GM13977 (cell line): ENCODE measurements at regions of chr13 and their contacts with region 1.

Region 1: DNA sequence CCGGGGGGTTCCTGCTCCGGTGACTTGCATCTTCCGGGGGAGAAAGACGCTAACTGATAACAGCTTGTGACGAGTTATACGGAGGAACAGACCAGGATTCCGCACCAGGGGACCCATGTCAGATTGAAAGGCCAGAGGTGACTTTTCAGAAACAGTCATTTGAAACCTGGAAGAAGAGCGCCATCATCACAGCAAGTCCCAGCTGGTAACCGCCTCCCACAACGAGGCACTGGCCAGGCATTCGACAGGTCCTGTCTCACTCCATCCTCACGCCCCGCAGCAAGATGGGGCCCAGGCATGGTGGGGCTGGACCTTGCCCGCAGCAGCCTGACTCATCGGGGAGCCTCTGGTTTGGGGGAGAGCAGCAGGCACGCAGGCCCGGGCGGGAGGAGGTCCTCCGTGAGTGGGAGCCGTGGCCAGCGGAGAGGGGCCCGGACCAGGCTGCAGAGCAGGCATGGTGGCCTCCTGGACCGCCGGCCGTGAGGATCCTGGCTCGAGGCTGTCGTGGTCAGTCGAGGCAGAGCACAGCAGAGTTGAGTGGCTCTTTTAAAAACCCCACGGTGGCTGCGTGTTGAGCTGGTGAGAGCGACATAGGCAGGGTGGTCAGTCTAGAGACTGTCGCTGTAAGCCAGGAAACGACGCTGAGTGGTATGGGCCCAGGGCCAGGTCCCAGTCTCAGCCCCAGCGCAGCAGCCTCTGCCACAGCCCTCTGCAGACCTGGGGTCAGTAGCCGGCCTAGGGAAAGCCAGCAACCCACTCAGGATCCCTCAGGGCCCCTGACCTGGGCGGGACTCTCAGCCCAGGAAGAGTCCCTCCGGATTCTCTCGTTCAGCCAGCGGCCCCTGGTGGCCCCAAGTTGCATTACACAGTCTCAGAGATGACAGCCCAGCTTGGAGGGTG is 94.9 kb upstream of the MCF2L start:
- DNase-seq: peak; percentile 91
- CTCF ChIP-seq: peak; percentile 98

Region 2: GRCh38 chr13:111184458-111185401 is 1689.4 kb before region 1 on chr13:
- in situ Hi-C with region 1: no loop called
- DNase-seq: peak; percentile 74
- CTCF ChIP-seq: no peak

Region 3: DNA sequence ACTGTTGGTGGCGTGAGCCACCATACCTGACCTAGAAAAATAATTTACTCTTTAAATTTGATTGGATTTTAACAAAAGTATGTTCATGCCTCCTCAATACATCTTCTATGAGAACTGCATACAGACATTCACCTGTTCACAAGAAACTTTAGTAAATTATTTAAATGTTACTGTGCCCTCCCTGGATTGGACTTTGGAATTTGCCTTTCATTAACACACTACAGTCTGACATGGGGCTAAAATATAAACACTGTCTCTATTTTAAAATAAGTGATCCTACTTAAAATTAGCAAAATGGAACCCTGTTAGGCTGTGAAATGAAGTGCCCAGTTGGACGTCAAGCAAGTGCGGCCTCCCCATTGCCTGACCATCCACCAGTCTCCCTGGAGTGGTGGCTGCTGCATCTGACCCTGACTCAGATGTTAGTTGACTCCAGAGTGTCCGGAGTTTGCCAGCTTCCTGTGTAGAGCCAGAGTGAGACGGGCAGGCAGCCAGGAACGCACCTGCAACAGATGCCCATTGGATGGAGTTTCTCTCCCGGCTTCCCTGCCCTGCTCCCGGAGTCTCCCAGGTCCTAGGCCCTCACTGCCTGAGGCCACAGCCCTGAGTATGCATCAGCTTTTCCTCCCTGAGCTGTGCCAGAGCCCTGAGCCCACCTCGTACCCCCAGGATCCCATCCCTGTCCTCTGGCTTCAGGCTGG is 230.2 kb before region 1 on chr13:
- in situ Hi-C with region 1: loop called (anchors 5 kb)
- DNase-seq: no peak
- CTCF ChIP-seq: no peak

Region 4: DNA sequence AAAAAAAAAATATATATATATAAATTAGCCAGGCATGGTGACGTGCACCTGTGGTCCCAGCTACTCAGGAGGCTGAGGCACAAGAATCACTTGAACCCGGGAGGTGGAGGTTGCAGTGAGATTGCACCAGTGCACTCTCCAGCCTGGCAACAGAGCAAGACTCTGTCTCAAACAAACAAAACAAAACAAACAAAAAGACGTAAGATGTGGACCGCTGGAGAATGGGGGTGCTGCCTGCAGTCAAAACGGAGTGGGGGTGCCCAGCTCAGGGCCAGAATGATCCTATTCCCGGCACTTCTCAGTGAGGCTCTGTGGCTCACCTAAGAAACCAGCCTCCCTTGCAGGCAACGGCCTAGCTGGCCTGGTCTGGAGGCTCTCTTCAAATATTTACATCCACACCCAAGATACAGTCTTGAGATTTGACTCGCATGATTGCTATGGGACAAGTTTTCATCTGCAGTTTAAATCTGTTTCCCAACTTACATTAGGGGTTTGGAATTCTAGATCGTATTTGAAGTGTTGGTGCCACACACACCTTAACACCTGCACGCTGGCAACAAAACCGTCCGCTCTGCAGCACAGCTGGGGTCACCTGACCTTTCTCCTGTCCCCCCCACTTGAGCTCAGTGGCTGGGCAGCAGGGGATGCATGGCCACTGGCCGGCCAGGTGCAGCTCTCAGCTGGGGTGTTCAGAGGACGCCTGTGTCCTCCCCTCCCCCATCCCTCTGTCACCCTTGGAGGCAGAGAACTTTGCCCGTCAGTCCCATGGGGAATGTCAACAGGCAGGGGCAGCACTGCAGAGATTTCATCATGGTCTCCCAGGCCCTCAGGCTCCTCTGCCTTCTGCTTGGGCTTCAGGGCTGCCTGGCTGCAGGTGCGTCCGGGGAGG is 231.2 kb after region 1 on chr13 and contains the start of gene F7:
- in situ Hi-C with region 1: no loop called
- DNase-seq: no peak
- CTCF ChIP-seq: no peak